Ascending aorta (tissue), 2 donors: ENCODE measurements at regions of chr19 and their contacts with region 1.

Region 1: GRCh38 chr19:5803752-5804515 is 933 bp upstream of the NRTN start:
- DNase-seq: peak; percentile 25 to 84
- H3K4me3 ChIP-seq: peak overlapping the region; percentile 25 to 49
- H3K27ac ChIP-seq: no peak overlapping the region
- H3K4me1 ChIP-seq: peaks cover 3% of the 10 kb centered on the region in 2 donors
- H3K27me3 ChIP-seq: peaks cover 16% of the 10 kb centered on the region
- CTCF ChIP-seq: peak; percentile 71 to 84 (median 79)

Region 2: DNA sequence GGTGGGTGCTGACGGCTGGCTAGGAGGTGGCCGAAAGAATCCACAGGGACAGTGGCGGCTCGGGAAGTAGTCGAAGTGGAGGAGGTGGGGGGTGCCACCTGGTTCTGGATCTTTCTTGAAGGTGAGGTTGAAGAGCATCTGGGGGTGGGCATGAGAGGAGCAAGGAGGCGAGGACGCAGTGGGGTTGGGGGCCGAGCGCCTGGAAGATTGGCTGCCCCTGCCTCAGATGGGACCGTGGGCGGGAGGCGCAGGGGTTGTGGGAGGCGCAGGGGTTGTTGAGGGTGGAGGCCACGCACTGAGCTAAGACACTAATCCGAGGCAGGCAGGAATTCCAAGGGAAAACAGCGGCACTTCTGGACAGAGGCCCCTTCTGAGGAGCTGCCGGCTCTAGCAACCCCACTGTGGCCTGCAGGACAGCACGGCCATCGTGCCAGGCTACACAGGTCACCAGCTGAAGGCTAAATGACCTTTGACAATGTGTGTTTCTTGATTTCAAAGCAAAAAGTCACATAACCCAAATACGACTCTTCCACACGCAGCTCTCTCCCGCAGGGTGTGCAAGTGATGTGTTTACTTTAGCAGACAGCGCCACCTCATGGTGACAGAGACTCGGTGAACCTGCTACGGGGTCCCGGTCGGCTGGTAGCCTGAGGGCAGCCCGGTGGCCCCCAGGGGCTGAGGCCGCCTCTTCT is 218.1 kb after region 1 on chr19:
- intact Hi-C with region 1: loop called (anchors 10 kb)
- DNase-seq: peak in 1 of 2 donors; percentile 78
- H3K4me3 ChIP-seq: no peak overlapping the region
- H3K27ac ChIP-seq: peak overlapping the region; percentile 46 to 51
- H3K4me1 ChIP-seq: peaks cover 0 to 5% of the 10 kb centered on the region in 2 donors
- H3K27me3 ChIP-seq: no peaks in the 10 kb centered on the region
- CTCF ChIP-seq: peak; percentile 53 to 66 (median 58)